B cell (primary cell): ENCODE measurements at regions of chr22 and their contacts with region 1.

Region 1: GRCh38 chr22:22030493-22031182 is 48.1 kb upstream of the TOP3B start:
- DNase-seq: peak; percentile 80
- ATAC-seq: peak; percentile 80
- H3K4me3 ChIP-seq: peak overlapping the region in 4 of 5 experiments; percentile 31 to 51 (median 45)
- H3K4me3 Mint-ChIP-seq: peak overlapping the region; percentile 91
- H3K27ac ChIP-seq: peak overlapping the region; percentile 70 to 75
- H3K27ac Mint-ChIP-seq: peak overlapping the region; percentile 97
- H3K4me1 ChIP-seq: peaks cover 56 to 69% of the 10 kb centered on the region in 2 donors
- H3K4me1 Mint-ChIP-seq: peaks cover 77% of the 10 kb centered on the region
- H3K27me3 ChIP-seq: no peaks in the 10 kb centered on the region
- H3K27me3 Mint-ChIP-seq: no peaks in the 10 kb centered on the region
- CTCF ChIP-seq: peak; percentile 67

Region 2: DNA sequence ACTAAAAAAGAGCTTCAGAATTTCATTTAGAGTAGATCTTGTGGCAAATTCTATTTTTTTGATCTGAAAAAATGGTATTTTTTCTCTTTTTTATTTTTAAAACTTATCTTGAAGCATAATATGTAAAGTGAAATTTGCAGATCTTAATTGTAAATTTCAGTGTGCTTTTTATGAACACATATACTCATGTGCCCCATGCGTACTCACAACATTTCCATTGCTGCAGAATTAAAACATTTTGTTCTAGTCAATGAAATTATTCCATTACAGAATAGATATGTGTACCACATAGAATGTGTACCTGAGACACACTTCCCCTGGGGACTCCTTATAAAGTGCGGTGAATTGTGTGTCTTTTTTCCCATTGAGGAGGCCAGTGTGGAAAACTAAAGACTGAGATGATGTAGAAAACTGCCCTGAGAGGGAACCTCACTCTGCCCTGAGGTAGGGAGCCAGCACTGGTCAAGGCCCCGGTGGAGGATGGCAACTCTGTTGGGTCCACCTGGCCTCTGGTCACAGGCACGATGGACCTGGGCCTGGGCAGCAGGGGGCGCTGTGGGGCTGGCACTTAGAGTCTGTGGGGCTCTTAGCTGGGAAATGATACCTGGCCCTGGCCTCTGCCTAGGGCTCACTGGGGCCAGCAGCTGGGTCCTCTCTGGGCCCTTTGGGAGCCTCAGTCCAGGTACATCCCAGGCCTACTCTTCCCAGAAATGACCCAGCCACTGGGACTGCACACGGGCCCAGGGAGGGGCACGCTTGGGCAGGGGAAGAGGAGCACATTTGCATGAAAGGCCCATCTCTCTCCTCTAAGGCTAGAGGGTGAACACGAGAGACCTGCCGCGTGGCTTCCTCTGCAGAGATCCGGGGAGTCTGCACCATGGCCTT is 29.8 kb after region 1 on chr22:
- CTCF ChIA-PET with region 1: interaction called, 122 read pairs
- POLR2A ChIA-PET with region 1: no interaction called
- intact Hi-C with region 1: loop called (anchors 2 kb)
- DNase-seq: peak; percentile 75
- ATAC-seq: peak; percentile 68
- H3K4me3 ChIP-seq: no peak overlapping the region
- H3K4me3 Mint-ChIP-seq: no peak overlapping the region
- H3K27ac ChIP-seq: no peak overlapping the region
- H3K27ac Mint-ChIP-seq: peak overlapping the region; percentile 73
- H3K4me1 ChIP-seq: peaks cover 33 to 36% of the 10 kb centered on the region in 2 donors
- H3K4me1 Mint-ChIP-seq: peaks cover 37% of the 10 kb centered on the region
- H3K27me3 ChIP-seq: no peaks in the 10 kb centered on the region
- H3K27me3 Mint-ChIP-seq: peaks cover 3% of the 10 kb centered on the region
- CTCF ChIP-seq: peak; percentile 86

Region 3: GRCh38 chr22:22161924-22162851 is 131.6 kb after region 1 on chr22:
- CTCF ChIA-PET with region 1: interaction called, 27 read pairs
- POLR2A ChIA-PET with region 1: interaction called, 6 read pairs
- intact Hi-C with region 1: no loop called
- DNase-seq: peak; percentile 80
- ATAC-seq: peak; percentile 95
- H3K4me3 ChIP-seq: peak overlapping the region in 4 of 5 experiments; percentile 14 to 70 (median 38)
- H3K4me3 Mint-ChIP-seq: peak overlapping the region; percentile 89
- H3K27ac ChIP-seq: peak overlapping the region; percentile 96 to 98
- H3K27ac Mint-ChIP-seq: peak overlapping the region; percentile 98
- H3K4me1 ChIP-seq: peaks cover 75 to 82% of the 10 kb centered on the region in 2 donors
- H3K4me1 Mint-ChIP-seq: peaks cover 85% of the 10 kb centered on the region
- H3K27me3 ChIP-seq: no peaks in the 10 kb centered on the region
- H3K27me3 Mint-ChIP-seq: no peaks in the 10 kb centered on the region
- CTCF ChIP-seq: no peak

Region 4: GRCh38 chr22:22201185-22201929 is 170.7 kb after region 1 on chr22:
- CTCF ChIA-PET with region 1: interaction called, 35 read pairs
- POLR2A ChIA-PET with region 1: interaction called, 5 read pairs
- intact Hi-C with region 1: no loop called
- DNase-seq: peak; percentile 69
- ATAC-seq: peak; percentile 72
- H3K4me3 ChIP-seq: no peak overlapping the region
- H3K4me3 Mint-ChIP-seq: peak overlapping the region; percentile 59
- H3K27ac ChIP-seq: peak overlapping the region; percentile 37 to 47
- H3K27ac Mint-ChIP-seq: peak overlapping the region; percentile 71
- H3K4me1 ChIP-seq: peaks cover 58 to 60% of the 10 kb centered on the region in 2 donors
- H3K4me1 Mint-ChIP-seq: peaks cover 61% of the 10 kb centered on the region
- H3K27me3 ChIP-seq: no peaks in the 10 kb centered on the region
- H3K27me3 Mint-ChIP-seq: no peaks in the 10 kb centered on the region
- CTCF ChIP-seq: peak; percentile 80

Region 5: DNA sequence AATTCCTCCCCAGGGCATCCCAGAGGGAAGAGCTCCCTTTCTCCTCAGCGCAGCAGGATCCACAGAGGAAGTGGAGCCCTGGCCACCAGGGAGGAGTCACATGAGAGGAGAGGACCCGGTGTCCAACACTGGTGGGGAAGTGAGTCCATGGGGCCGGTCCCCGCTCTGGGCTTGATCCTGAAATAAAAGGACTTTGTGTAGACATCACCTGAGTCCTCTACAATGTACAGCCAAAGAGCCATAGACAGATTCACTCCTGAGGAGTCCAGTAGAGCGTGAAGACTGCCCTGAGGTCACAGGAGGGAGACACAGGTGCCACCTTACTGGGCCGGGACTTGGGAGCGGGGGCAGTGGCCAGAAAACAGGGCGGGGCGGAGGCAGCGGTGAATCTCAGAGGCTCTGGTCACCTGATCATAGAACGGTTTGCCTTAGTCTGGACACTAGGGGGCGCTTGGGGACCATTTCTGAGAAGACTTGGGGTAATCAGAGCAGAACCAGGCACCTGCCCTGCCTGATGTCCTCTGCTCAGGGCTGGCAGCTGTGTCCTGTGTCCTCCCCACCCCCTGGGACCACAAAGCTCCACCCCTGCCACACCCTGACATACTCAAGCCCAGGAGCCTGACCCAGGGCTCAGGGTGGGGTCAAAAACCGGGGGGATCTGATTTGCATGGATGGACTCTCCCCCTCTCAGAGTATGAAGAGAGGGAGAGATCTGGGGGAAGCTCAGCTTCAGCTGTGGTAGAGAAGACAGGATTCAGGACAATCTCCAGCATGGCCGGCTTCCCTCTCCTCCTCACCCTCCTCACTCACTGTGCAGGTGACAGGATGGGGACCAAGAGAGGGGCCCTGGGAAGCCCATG is 326.6 kb after region 1 on chr22:
- CTCF ChIA-PET with region 1: interaction called, 3 read pairs
- POLR2A ChIA-PET with region 1: no interaction called
- intact Hi-C with region 1: loop called (anchors 5 kb)
- DNase-seq: peak; percentile 93
- ATAC-seq: peak; percentile 90
- H3K4me3 ChIP-seq: peak overlapping the region in 3 of 5 experiments; percentile 18 to 27 (median 26)
- H3K4me3 Mint-ChIP-seq: peak overlapping the region; percentile 65
- H3K27ac ChIP-seq: peak overlapping the region; percentile 61 to 71
- H3K27ac Mint-ChIP-seq: peak overlapping the region; percentile 90
- H3K4me1 ChIP-seq: peaks cover 29 to 49% of the 10 kb centered on the region in 2 donors
- H3K4me1 Mint-ChIP-seq: peaks cover 59% of the 10 kb centered on the region
- H3K27me3 ChIP-seq: no peaks in the 10 kb centered on the region
- H3K27me3 Mint-ChIP-seq: no peaks in the 10 kb centered on the region
- CTCF ChIP-seq: peak; percentile 72